AG04449 (cell line): ENCODE measurements at regions of chr17 and their contacts with region 1.

Region 1: DNA sequence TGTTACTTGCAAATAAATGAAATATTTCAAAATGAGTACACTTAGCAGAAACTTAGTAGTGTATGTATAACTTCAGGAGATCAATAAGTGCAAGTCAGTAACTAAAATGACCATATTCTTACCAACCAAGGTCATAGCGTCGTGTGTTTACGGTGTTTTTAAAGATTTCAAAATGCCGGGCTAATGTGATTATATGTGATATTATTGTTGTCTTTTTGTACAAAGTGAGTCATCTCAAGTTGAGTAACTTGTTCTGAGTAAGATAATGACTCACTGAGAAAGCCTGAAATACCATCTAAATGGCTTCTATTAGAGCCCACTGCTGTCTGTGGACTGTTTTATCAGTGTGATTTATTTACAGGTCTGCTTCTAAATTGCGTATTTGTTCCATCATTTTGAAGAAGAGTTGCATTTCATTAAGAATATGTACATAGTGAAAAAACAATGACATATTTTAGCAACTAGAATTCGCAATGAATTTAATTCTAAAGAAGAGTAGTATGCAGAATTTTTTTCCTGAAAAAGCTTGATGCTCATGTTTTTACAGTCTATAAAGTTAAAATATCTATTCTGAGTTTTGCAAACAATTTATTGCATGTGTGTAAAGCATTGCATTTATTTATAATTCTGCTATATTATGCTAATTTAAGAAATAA is 12.7 kb downstream of the KRT12 start:
- DNase-seq: peak; percentile 80
- H3K4me3 ChIP-seq: no peak overlapping the region
- CTCF ChIP-seq: no peak

Region 2: DNA sequence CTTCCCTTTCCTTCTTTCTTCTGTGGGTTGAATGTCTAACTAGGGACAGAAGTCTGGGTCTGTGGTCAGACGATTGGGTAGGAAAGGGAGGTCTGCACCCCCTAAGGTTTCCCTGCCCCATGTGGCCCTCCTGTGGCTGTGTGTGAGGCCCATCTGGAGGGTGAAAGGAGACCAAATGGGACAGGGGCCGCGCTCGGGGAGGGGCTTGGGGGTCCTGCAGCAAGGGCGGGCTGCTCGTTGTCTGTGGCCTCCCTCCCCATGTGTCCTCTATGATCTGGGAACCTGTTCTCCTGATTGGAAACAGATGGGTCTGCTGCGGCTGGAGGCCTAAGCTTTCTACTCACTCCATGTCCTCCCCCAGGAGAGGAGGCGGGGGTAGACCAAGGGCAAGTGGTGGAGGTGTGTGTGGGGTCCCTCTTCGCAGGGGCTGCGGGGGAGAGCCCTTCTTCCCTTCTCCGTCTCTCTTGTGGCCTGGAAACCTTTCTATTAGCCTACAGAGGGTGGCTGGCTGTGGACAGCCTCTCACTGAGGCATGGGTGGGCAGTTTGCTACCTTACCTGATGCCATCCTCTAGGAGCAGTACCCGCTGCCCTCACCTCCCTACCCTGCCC is 392.4 kb before region 1 on chr17:
- CTCF ChIA-PET with region 1: no interaction called
- POLR2A ChIA-PET with region 1: no interaction called
- DNase-seq: no peak
- H3K4me3 ChIP-seq: no peak overlapping the region
- CTCF ChIP-seq: no peak

Region 3: DNA sequence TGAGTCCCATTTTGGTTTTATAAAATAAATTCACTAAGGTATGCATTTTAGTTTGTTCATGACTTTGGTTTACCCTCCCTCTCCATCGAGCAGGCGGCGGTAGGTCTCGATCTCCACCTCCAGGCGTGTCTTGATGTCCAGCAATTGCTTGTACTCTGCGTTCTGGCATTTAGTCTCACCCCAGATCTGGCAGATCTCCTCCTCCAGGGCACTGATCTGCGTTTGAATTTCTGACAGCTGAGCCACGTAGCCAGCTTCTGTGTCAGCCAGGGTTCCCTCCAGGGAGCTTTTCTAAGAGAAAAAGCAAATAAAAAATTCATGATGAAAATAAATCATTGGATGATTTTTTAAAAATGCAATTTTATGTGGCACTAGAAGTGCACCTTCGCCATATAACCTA is 154.9 kb before region 1 on chr17:
- CTCF ChIA-PET with region 1: no interaction called
- POLR2A ChIA-PET with region 1: no interaction called
- DNase-seq: no peak
- H3K4me3 ChIP-seq: no peak overlapping the region
- CTCF ChIP-seq: no peak

Region 4: GRCh38 chr17:40803617-40804082 is 50.6 kb before region 1 on chr17:
- CTCF ChIA-PET with region 1: interaction called, 22 read pairs
- POLR2A ChIA-PET with region 1: no interaction called
- DNase-seq: no peak
- H3K4me3 ChIP-seq: no peak overlapping the region
- CTCF ChIP-seq: peak; percentile 92

Region 5: DNA sequence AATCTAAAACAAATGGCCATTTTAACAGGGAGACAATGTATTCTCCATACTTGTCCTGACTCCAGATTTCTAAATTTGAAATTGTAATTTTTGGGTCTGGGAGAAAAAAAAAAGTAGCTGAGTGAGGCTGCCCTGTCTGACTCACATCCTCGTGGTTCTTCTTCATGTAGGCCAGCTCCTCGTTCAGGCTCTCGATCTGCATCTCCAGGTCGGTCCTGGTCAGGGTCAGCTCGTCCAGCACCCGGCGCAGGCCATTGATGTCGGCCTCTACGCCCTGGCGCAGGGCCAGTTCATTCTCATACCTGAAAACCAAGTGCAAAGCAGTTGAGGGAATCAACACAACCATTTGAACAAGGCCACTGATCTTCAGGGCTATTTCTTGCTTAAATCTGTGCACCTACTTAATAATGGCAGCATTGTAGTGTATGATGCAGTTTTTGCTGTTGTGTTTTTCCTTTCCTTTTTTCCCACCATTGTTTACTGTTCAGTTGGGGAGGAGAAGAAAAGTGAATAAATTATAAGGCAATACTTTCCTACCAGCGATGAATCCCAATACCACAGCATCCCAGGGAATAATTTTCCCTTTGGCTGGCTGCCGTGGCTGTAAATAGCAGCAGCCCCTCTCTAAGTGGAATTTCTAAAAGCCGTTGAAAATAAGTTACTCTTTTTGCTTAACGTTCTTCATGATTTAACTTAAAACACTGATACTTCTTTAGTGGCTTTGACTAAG is 10.5 kb after region 1 on chr17:
- CTCF ChIA-PET with region 1: interaction called, 22 read pairs
- POLR2A ChIA-PET with region 1: no interaction called
- DNase-seq: no peak
- H3K4me3 ChIP-seq: no peak overlapping the region
- CTCF ChIP-seq: no peak

Region 6: GRCh38 chr17:41008805-41009204 is 154.5 kb after region 1 on chr17 and contains the start of gene KRTAP3-1:
- CTCF ChIA-PET with region 1: no interaction called
- POLR2A ChIA-PET with region 1: no interaction called
- DNase-seq: no peak
- H3K4me3 ChIP-seq: no peak within 1 kb of the TSS
- CTCF ChIP-seq: no peak

Region 7: DNA sequence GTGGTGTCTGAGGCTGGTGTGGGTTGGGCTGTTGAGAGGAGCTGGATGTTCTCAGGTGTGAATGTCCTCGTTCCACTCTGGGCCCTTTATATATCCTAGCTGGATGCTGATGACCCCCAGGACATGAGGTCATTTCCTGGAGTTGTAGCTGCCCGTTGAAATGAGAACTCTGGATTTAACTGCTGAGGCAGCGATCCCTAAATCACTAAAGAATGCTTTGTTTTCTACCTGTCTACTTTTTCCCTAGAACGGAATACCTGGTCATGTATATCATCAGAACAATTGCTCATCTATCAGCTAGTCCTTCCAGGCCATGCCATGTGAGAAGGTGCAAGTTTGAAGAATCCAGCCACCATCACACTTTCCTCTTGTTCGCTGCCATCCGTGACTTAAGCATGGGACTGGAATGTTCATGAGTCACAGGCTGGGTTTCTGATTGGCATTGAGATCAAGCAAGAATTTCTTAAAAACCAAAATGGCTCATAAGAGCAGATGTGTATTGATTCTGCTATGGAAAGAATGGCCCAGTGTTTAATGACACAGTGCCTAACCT is 205.8 kb after region 1 on chr17 and contains the start of gene KRTAP2-3:
- CTCF ChIA-PET with region 1: interaction called, 10 read pairs
- POLR2A ChIA-PET with region 1: no interaction called
- DNase-seq: peak; percentile 95
- H3K4me3 ChIP-seq: peak within 1 kb of the TSS; percentile 15
- CTCF ChIP-seq: no peak

Region 8: GRCh38 chr17:41116297-41116696 is 262.0 kb after region 1 on chr17:
- CTCF ChIA-PET with region 1: no interaction called
- POLR2A ChIA-PET with region 1: no interaction called
- DNase-seq: no peak
- H3K4me3 ChIP-seq: no peak overlapping the region
- CTCF ChIP-seq: no peak

Region 9: DNA sequence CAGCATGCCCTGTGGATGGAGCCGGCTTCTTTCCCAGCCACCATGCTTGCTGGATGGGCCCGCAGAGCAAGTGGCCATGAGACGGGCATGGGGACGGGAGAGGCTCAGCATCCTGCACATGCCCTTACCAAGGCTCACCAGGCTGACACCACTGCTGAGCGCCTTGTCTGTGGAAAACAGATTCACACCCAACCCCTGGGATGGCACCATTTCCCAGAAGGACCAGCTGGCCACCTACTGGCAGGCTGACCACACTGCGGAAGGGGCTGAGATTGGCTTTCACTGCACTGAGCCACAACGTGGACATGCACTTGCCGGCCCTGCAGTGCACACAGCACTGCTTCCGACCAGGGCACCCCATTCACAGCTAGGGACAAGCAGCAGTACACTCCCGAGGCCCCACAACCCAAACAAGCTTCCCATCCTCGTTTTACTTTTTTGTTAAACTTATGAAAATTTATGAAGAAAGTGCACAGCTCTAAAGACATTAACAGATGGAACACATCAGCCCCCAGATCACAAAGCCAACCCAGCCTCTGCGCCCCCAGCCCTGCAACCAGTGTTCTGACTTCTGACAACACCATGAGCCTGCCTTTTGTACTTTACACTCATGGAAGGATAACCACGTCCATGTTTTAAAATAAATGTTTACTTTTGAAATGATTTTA is 475.1 kb after region 1 on chr17:
- CTCF ChIA-PET with region 1: interaction called, 18 read pairs
- POLR2A ChIA-PET with region 1: no interaction called
- DNase-seq: no peak
- H3K4me3 ChIP-seq: no peak overlapping the region
- CTCF ChIP-seq: peak; percentile 95